ENCODE measurements at regions of chr12 and their contacts with region 1.

Region 1: DNA sequence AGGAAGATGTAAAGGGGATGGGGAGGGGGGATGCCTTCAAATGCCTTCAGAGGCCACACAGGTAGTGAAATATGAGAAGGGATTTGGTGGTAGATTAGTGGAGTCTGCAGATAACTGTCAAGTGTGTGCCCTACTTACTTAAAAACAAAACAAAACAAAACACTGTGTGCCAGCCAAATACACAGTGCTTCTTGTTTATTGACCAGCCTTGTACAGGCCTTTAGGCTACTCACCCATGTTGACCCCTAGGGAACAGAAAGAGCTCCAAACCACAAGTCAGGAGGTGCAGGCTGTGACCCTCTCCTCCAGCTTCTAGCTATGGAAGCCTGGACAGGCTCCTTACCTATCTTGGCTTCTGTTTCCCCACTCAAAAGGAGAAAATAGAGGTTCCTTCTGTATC is 562.0 kb downstream of the ETNK1 start:
- DNase-seq: no peak
- H3K4me3 ChIP-seq: no peak overlapping the region
- H3K27ac ChIP-seq: no peak overlapping the region
- H3K4me1 ChIP-seq: no peaks in the 10 kb centered on the region
- H3K27me3 ChIP-seq: no peaks in the 10 kb centered on the region
- CTCF ChIP-seq: no peak

Region 2: DNA sequence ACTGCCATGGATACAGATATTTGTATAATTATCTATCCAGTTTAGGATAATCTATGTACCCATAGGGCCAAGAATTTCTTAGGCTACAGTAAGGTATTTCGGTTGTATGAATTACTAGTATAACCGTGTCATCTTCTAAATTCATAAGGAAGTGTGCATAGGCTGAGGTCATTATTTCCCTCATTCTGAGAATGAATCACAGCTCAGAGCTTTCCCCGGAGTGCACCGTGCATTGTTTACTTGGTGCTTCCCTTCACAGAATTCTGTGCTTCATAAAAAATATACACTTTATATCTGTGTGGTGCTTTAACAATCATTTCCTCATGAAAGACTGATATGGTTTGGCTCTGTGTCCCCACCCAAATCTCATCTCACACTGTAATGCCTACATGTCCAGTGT is 47.9 kb before region 1 on chr12:
- dilution Hi-C with region 1: loop called (anchors 10 kb)
- DNase-seq: no peak
- H3K4me3 ChIP-seq: no peak overlapping the region
- H3K27ac ChIP-seq: no peak overlapping the region
- H3K4me1 ChIP-seq: no peaks in the 10 kb centered on the region
- H3K27me3 ChIP-seq: no peaks in the 10 kb centered on the region
- CTCF ChIP-seq: no peak